Breast epithelium (tissue), 4 donors: ENCODE measurements at regions of chr5 and their contacts with region 1.

Region 1: GRCh38 chr5:92687821-92688722 is 892.9 kb downstream of the NR2F1-AS1 start:
- DNase-seq: no peak
- H3K4me3 ChIP-seq: peak overlapping the region in 1 of 3 donors; percentile 7
- H3K27ac ChIP-seq: no peak overlapping the region
- H3K4me1 ChIP-seq: no peaks in the 10 kb centered on the region
- H3K27me3 ChIP-seq: no peaks in the 10 kb centered on the region
- CTCF ChIP-seq: peak in 1 of 3 donors; percentile 17
- POLR2A ChIP-seq: no peak

Region 2: GRCh38 chr5:90777959-90778358 is 1910.1 kb before region 1 on chr5:
- intact Hi-C with region 1: no loop called
- DNase-seq: no peak
- H3K4me3 ChIP-seq: no peak overlapping the region
- H3K27ac ChIP-seq: no peak overlapping the region
- H3K4me1 ChIP-seq: no peaks in the 10 kb centered on the region
- H3K27me3 ChIP-seq: no peaks in the 10 kb centered on the region
- CTCF ChIP-seq: no peak
- POLR2A ChIP-seq: no peak

Region 3: DNA sequence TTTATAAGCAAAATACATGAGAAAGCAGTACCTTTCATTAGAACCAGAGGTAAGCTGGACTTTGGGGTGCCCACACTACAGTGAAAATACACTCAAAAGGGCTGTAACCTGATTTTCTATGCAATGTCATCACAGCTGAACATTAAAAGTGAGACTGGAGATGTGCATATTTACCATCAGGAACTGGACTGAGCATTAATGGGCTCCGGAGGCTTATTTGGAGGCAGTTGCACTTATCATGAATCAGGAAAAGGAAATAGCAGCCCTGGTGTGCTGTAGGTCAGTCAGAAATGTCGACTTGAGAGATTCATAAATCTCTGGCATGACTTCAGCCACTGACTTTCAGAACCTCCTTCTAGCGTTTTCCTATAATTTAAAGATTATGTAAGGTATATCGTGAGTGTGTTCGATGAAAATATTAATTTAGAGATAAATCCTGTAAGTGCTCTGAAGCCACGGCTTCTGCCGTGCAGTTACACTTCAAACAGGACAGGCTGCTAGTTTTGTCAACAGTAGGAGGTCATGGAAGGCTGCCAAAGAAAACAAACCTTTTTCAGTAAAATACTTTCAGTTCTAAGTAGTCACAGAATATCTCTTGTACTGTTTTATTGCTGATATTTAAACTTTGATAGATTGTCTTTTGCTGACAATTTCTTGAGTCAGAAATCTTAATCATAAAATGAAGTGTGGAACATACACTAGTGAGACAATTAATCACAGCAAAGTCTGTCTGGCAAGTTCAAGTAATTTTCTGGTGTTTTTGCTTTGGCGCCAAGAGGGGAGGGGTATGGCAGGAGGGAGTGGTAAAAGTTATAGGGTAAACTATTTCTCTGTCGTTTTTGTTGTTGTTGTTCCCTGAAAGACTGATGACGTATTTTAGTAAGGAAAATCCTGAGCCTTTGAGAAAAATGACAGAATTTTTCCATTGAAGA is 46.8 kb before region 1 on chr5:
- intact Hi-C with region 1: loop called (anchors 2 kb)
- DNase-seq: no peak
- H3K4me3 ChIP-seq: peak overlapping the region; percentile 7 to 54 (median 30)
- H3K27ac ChIP-seq: peak overlapping the region; percentile 15 to 43
- H3K4me1 ChIP-seq: no peaks in the 10 kb centered on the region
- H3K27me3 ChIP-seq: no peaks in the 10 kb centered on the region
- CTCF ChIP-seq: no peak
- POLR2A ChIP-seq: no peak

Region 4: DNA sequence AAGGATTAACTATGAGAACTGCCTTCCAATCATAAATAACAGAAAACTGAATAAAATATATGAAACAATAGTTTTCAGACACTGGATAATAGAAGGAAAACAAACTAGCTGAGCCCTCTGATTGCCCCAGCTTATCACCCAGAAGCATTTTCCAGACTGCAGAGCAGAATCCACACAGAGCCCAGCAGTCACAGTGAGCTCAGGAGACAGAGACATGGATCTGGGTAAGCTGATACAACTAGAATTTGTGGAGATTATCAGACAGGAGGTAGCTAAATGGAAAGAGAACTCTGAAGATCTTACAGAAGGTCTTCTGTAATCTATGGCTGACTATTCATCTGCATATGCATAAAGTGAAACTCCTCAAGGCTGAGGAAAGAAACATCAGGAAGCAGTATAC is 764.2 kb after region 1 on chr5:
- intact Hi-C with region 1: no loop called
- DNase-seq: no peak
- H3K4me3 ChIP-seq: no peak overlapping the region
- H3K27ac ChIP-seq: no peak overlapping the region
- H3K4me1 ChIP-seq: no peaks in the 10 kb centered on the region
- H3K27me3 ChIP-seq: no peaks in the 10 kb centered on the region
- CTCF ChIP-seq: no peak
- POLR2A ChIP-seq: no peak